CD8-positive, alpha-beta T cell (primary cell): ENCODE measurements at regions of chr10 and their contacts with region 1.

Region 1: DNA sequence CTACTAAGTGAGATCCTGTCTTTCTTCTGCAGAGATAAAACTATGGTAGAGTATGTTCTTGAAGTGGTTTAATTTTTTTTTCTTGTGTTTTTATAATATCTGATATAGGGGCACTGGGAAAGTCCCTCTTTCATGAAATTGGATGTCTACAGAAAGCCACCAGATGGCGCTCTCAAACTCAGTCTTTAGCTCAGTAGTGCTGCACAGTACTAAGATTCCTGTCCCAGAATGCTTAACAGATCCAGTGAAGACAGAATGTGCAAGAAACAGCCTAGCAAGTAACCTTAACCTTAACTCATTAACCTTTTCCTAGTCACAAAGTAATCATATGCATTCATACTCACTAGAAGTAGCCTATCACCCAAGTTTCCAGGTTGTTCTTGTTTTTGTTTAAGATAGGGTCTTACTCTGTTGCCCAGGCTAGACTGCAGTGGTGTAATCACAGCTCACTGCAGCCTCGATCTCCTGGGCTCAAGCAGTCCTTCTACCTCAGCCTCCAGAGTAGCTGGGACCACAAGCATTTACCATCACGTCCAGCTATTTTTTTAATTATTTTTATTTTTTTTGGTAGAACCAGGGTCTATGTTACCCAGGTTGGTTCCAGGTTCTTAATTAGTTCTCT is 56.7 kb downstream of the IDE start:
- DNase-seq: peak; percentile 38 to 89 (median 73)
- ATAC-seq: peak; percentile 99
- H3K4me3 ChIP-seq: no peak overlapping the region
- H3K4me3 Mint-ChIP-seq: no peak overlapping the region
- H3K27ac ChIP-seq: peak overlapping the region in 1 of 2 experiments; percentile 7
- H3K27ac Mint-ChIP-seq: no peak overlapping the region
- H3K4me1 ChIP-seq: no peaks in the 10 kb centered on the region
- H3K4me1 Mint-ChIP-seq: peaks cover 8% of the 10 kb centered on the region
- H3K27me3 ChIP-seq: no peaks in the 10 kb centered on the region
- H3K27me3 Mint-ChIP-seq: no peaks in the 10 kb centered on the region
- CTCF ChIP-seq: peak; percentile 81

Region 2: DNA sequence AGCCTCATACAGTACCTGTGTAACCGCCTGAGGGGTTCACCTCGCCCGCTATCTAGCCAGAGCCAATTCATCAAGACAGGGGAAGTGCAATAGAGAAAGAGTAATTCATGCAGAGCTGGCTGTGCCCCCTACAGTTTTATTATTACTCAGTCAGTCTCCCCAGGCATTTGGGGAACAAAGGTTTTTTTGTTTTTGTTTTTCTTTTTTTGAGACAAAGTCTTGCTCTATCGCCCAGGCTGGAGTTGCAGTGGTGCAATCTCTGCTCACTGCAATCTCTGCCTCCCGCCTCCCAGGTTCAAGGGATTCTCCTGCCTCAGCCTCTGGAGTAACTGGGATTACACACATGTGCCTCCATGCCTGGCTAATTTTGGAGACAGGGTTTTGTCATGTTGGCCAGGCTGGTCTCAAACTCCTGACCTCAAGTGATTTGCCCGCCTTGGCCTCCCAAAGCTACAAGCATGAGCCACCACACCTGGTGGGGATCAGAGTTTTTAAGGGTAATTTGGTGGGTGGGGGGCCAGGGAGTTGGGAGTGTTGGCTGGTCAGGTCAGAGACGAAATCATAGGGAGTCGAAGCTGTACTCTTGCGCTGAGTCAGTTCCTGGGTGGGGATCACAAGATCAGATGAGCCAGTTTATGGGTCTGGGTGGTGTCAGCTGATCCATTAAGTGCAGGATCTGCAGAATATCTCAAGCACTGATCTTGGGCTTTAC is 109.7 kb before region 1 on chr10:
- CTCF ChIA-PET with region 1: no interaction called
- POLR2A ChIA-PET with region 1: no interaction called
- intact Hi-C with region 1: no loop called
- DNase-seq: no peak
- ATAC-seq: no peak
- H3K4me3 ChIP-seq: no peak overlapping the region
- H3K4me3 Mint-ChIP-seq: no peak overlapping the region
- H3K27ac ChIP-seq: no peak overlapping the region
- H3K27ac Mint-ChIP-seq: no peak overlapping the region
- H3K4me1 ChIP-seq: no peaks in the 10 kb centered on the region
- H3K4me1 Mint-ChIP-seq: no peaks in the 10 kb centered on the region
- H3K27me3 ChIP-seq: no peaks in the 10 kb centered on the region
- H3K27me3 Mint-ChIP-seq: no peaks in the 10 kb centered on the region
- CTCF ChIP-seq: no peak

Region 3: GRCh38 chr10:92470041-92470440 is 47.1 kb before region 1 on chr10:
- CTCF ChIA-PET with region 1: no interaction called
- POLR2A ChIA-PET with region 1: no interaction called
- intact Hi-C with region 1: loop called in 1 of 2 experiments (anchors 2 kb)
- DNase-seq: no peak
- ATAC-seq: no peak
- H3K4me3 ChIP-seq: no peak overlapping the region
- H3K4me3 Mint-ChIP-seq: no peak overlapping the region
- H3K27ac ChIP-seq: no peak overlapping the region
- H3K27ac Mint-ChIP-seq: no peak overlapping the region
- H3K4me1 ChIP-seq: no peaks in the 10 kb centered on the region
- H3K4me1 Mint-ChIP-seq: no peaks in the 10 kb centered on the region
- H3K27me3 ChIP-seq: no peaks in the 10 kb centered on the region
- H3K27me3 Mint-ChIP-seq: no peaks in the 10 kb centered on the region
- CTCF ChIP-seq: no peak

Region 4: GRCh38 chr10:92527716-92528115 is 10.6 kb after region 1 on chr10:
- CTCF ChIA-PET with region 1: interaction called, 10 read pairs
- POLR2A ChIA-PET with region 1: interaction called, 3 read pairs
- intact Hi-C with region 1: no loop called
- DNase-seq: no peak
- ATAC-seq: no peak
- H3K4me3 ChIP-seq: no peak overlapping the region
- H3K4me3 Mint-ChIP-seq: no peak overlapping the region
- H3K27ac ChIP-seq: no peak overlapping the region
- H3K27ac Mint-ChIP-seq: no peak overlapping the region
- H3K4me1 ChIP-seq: no peaks in the 10 kb centered on the region
- H3K4me1 Mint-ChIP-seq: no peaks in the 10 kb centered on the region
- H3K27me3 ChIP-seq: no peaks in the 10 kb centered on the region
- H3K27me3 Mint-ChIP-seq: no peaks in the 10 kb centered on the region
- CTCF ChIP-seq: no peak

Region 5: GRCh38 chr10:92573798-92574547 is 56.8 kb after region 1 on chr10 and contains the start of gene IDE:
- CTCF ChIA-PET with region 1: interaction called, 116 read pairs
- POLR2A ChIA-PET with region 1: interaction called, 12 read pairs
- intact Hi-C with region 1: loop called (anchors 1 kb)
- DNase-seq: peak; percentile 43 to 89 (median 76)
- ATAC-seq: peak; percentile 70
- H3K4me3 ChIP-seq: peak within 1 kb of the TSS; percentile 85 to 100
- H3K4me3 Mint-ChIP-seq: peak within 1 kb of the TSS; percentile 93
- H3K27ac ChIP-seq: peak within 1 kb of the TSS; percentile 74 to 92
- H3K27ac Mint-ChIP-seq: peak within 1 kb of the TSS; percentile 93
- H3K4me1 ChIP-seq: peaks cover 18% of the 10 kb centered on the region
- H3K4me1 Mint-ChIP-seq: peaks cover 42% of the 10 kb centered on the region
- H3K27me3 ChIP-seq: no peaks in the 10 kb centered on the region
- H3K27me3 Mint-ChIP-seq: no peaks in the 10 kb centered on the region
- CTCF ChIP-seq: no peak
- total RNA-seq, gene IDE: 12.1 to 13.2 TPM

Region 6: DNA sequence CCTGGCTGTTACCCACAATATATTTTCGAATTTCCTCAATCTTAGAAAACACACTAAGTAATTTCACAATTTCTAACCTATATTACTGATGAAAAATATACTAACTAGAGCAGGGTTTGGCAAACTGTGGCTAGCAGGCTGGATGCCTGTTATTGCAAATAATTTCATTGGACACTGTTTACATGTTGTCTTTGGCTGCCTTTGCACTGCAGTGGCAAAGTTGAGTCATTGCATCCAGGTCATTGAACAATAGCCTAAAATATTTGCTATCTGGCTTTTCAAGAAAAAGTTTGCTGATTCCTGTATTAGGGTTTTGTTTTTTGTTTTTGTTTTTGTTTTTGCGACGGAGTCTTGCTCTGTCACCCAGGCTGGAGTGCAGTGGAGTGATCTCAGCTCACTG is 123.0 kb after region 1 on chr10:
- CTCF ChIA-PET with region 1: no interaction called
- POLR2A ChIA-PET with region 1: no interaction called
- intact Hi-C with region 1: loop called in 1 of 2 experiments (anchors 5 kb)
- DNase-seq: peak in 1 of 9 experiments; percentile 4
- ATAC-seq: no peak
- H3K4me3 ChIP-seq: no peak overlapping the region
- H3K4me3 Mint-ChIP-seq: no peak overlapping the region
- H3K27ac ChIP-seq: no peak overlapping the region
- H3K27ac Mint-ChIP-seq: no peak overlapping the region
- H3K4me1 ChIP-seq: no peaks in the 10 kb centered on the region
- H3K4me1 Mint-ChIP-seq: no peaks in the 10 kb centered on the region
- H3K27me3 ChIP-seq: no peaks in the 10 kb centered on the region
- H3K27me3 Mint-ChIP-seq: no peaks in the 10 kb centered on the region
- CTCF ChIP-seq: no peak

Region 7: GRCh38 chr10:92880233-92880861 is 363.2 kb after region 1 on chr10:
- CTCF ChIA-PET with region 1: no interaction called
- POLR2A ChIA-PET with region 1: no interaction called
- intact Hi-C with region 1: loop called (anchors 1 kb)
- DNase-seq: peak in 3 of 9 experiments; percentile 5 to 56 (median 45)
- ATAC-seq: no peak
- H3K4me3 ChIP-seq: no peak overlapping the region
- H3K4me3 Mint-ChIP-seq: no peak overlapping the region
- H3K27ac ChIP-seq: no peak overlapping the region
- H3K27ac Mint-ChIP-seq: no peak overlapping the region
- H3K4me1 ChIP-seq: peaks cover 12% of the 10 kb centered on the region
- H3K4me1 Mint-ChIP-seq: peaks cover 23% of the 10 kb centered on the region
- H3K27me3 ChIP-seq: no peaks in the 10 kb centered on the region
- H3K27me3 Mint-ChIP-seq: no peaks in the 10 kb centered on the region
- CTCF ChIP-seq: peak; percentile 52

Region 8: DNA sequence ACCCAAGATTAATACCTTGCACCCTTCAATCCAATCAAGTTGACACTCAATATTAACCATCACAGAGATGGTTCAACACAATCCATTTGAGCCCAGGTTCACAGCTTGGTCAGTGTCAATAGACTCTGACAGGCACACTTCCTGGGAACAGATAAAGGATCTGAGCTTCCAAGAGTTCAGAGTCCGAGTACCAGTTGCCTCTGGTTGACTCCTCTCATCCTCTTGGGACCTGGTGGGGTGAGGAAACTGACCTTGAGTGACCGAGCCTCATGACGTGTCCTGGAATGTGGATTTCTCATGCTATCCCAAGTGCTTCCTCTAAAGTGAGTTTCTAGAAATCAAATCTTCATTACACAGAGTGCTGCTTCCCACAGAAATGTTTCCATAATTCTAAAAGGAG is 718.5 kb after region 1 on chr10:
- CTCF ChIA-PET with region 1: no interaction called
- POLR2A ChIA-PET with region 1: no interaction called
- intact Hi-C with region 1: no loop called
- DNase-seq: no peak
- ATAC-seq: no peak
- H3K4me3 ChIP-seq: no peak overlapping the region
- H3K4me3 Mint-ChIP-seq: no peak overlapping the region
- H3K27ac ChIP-seq: no peak overlapping the region
- H3K27ac Mint-ChIP-seq: no peak overlapping the region
- H3K4me1 ChIP-seq: no peaks in the 10 kb centered on the region
- H3K4me1 Mint-ChIP-seq: no peaks in the 10 kb centered on the region
- H3K27me3 ChIP-seq: no peaks in the 10 kb centered on the region
- H3K27me3 Mint-ChIP-seq: peaks cover 16% of the 10 kb centered on the region
- CTCF ChIP-seq: no peak